ENCODE measurements at regions of chr9 and their contacts with region 1.

Region 1: DNA sequence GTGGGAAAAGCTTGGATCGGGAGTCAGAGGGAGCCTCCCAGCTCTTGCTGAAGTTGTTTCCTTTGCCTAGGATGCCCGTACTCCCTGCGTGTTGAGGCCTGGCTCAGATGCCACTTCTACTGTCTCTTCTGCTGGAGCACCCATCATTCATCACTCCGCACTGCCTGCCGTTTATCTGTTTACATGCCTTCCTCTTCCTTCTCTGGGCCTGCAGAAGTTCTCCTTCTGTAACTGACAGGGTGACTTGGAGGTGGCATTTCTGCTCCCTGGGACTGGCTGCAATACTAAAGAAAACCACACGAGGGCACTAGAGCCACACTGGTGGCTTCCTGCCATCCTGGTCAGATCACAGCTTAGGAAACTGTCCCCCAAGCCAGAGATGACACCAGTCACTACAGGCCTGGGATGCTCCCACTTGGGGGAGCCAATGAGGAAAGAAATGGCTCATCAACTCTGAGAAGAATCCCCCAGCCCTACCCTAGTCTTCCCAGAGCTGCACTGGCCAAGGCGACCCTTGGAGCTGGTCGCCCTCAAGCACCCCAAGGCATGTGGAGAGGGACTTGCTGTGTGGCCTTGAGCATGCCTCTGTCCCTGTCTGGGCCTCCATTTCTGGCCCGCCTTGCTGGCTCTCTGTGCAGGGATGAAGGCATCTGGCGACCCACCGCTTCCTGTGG is 9.7 kb upstream of the SLC25A51 start:
- DNase-seq: peak; percentile 76 to 86 (median 82)
- ATAC-seq: peak; percentile 74
- H3K4me3 ChIP-seq: no peak overlapping the region
- H3K27ac ChIP-seq: peak overlapping the region in 2 of 4 donors; percentile 26 to 71
- H3K4me1 ChIP-seq: peaks cover 37% of the 10 kb centered on the region
- H3K27me3 ChIP-seq: no peaks in the 10 kb centered on the region
- CTCF ChIP-seq: peak; percentile 86 to 99 (median 97)
- POLR2A ChIP-seq: peak in 1 of 3 donors; percentile 0

Region 2: GRCh38 chr9:37410969-37411785 is 502.4 kb before region 1 on chr9:
- intact Hi-C with region 1: no loop called
- DNase-seq: no peak
- ATAC-seq: no peak
- H3K4me3 ChIP-seq: no peak overlapping the region
- H3K27ac ChIP-seq: no peak overlapping the region
- H3K4me1 ChIP-seq: peaks cover 25% of the 10 kb centered on the region
- H3K27me3 ChIP-seq: no peaks in the 10 kb centered on the region
- CTCF ChIP-seq: no peak
- POLR2A ChIP-seq: no peak

Region 3: GRCh38 chr9:37746848-37747753 is 166.5 kb before region 1 on chr9:
- intact Hi-C with region 1: loop called (anchors 10 kb)
- DNase-seq: peak; percentile 71 to 77 (median 72)
- ATAC-seq: peak; percentile 85
- H3K4me3 ChIP-seq: no peak overlapping the region
- H3K27ac ChIP-seq: no peak overlapping the region
- H3K4me1 ChIP-seq: no peaks in the 10 kb centered on the region
- H3K27me3 ChIP-seq: no peaks in the 10 kb centered on the region
- CTCF ChIP-seq: peak; percentile 64 to 99 (median 84)
- POLR2A ChIP-seq: no peak

Region 4: DNA sequence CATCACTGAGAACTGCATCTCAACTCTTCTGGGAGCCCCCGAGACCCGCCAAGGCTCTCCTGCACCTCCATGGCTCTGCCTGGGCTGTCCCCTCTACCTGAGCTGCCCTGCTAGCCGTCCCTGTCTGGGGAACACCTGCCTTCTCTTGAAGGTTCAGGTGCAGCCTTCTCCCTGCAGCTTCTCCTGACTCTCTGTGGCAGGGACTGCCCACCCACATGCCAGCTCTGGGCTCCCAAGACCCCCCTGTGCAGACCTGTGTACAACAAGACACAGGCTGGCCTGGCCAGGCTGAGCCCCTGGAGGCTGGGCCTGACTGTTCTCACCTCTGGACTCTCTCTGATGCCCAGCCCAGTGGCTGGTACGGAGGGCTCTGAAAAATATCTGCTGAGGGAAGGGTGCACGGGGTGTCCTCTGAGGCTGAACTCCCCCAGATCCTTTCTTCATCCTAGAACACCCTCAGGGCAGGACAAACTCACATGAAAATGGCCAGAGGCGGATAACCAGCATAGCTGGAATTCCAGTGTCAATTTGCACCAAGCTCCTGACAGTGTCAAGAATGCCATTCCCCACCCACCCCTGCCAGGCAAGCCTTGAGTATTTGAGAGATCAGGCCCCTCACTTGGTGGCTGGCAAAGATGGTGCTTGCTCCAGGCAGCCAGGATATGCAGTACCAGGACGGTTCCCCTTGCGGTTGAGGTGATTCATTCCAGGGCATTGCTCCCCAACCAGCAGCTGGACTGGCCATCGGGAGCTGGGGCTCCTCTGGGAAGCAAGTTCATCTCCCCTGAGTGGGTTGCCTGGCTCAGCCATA is 31.3 kb after region 1 on chr9:
- intact Hi-C with region 1: loop called (anchors 5 kb)
- DNase-seq: no peak
- ATAC-seq: no peak
- H3K4me3 ChIP-seq: no peak overlapping the region
- H3K27ac ChIP-seq: peak overlapping the region in 2 of 4 donors; percentile 45 to 55
- H3K4me1 ChIP-seq: peaks cover 30% of the 10 kb centered on the region
- H3K27me3 ChIP-seq: no peaks in the 10 kb centered on the region
- CTCF ChIP-seq: no peak
- POLR2A ChIP-seq: no peak

Region 5: DNA sequence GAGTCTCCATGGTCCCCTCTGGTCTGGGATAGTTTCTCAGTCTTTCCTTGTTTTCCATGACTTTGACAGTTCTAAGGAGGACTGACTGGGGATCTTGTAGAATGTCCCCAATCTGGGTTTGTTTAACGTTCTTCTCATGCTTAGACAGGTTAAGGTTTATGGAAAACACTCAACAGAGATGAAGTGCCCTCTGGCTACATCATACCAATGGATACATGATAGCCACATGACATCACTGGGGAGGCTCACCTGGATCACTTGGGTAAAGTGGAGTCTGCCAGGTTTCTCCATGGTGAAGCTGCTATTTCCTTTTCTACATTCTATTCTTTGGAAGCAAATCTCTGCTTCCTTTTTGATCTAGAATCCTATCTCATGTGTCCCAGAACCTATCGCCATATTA is 455.1 kb after region 1 on chr9:
- intact Hi-C with region 1: loop called (anchors 5 kb)
- DNase-seq: no peak
- ATAC-seq: no peak
- H3K4me3 ChIP-seq: no peak overlapping the region
- H3K27ac ChIP-seq: no peak overlapping the region
- H3K4me1 ChIP-seq: no peaks in the 10 kb centered on the region
- H3K27me3 ChIP-seq: no peaks in the 10 kb centered on the region
- CTCF ChIP-seq: no peak
- POLR2A ChIP-seq: no peak

Measured in body of pancreas (tissue), 4 donors.